Activated naive CD4-positive, alpha-beta T cell treated with anti-CD3 and anti-CD28 coated beads for 36 hours (primary cell): ENCODE measurements at regions of chr19 and their contacts with region 1.

Region 1: DNA sequence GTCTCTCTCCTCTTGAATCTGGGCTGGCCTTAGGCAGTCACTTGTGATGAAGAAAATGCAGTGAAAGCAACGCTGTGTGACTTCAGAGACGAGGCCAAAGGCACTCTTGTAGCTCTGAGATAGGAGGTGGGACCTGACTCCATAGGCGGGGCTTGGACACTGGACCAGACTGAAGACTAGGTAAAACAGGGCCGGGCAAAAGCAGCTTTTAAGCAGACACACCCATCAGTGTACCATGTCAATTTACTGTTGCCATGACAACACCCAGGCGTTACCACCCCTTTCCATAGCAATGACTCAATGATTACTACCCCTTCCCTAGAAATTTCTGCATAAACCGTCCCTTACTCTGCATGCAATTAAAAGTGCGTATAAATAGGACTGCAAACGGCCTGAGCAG is 6.6 kb upstream of the EID2 start:
- DNase-seq: no peak
- H3K4me3 Mint-ChIP-seq: no peak overlapping the region
- H3K27ac Mint-ChIP-seq: no peak overlapping the region
- H3K4me1 Mint-ChIP-seq: peaks cover 45% of the 10 kb centered on the region
- H3K27me3 Mint-ChIP-seq: no peaks in the 10 kb centered on the region

Region 2: DNA sequence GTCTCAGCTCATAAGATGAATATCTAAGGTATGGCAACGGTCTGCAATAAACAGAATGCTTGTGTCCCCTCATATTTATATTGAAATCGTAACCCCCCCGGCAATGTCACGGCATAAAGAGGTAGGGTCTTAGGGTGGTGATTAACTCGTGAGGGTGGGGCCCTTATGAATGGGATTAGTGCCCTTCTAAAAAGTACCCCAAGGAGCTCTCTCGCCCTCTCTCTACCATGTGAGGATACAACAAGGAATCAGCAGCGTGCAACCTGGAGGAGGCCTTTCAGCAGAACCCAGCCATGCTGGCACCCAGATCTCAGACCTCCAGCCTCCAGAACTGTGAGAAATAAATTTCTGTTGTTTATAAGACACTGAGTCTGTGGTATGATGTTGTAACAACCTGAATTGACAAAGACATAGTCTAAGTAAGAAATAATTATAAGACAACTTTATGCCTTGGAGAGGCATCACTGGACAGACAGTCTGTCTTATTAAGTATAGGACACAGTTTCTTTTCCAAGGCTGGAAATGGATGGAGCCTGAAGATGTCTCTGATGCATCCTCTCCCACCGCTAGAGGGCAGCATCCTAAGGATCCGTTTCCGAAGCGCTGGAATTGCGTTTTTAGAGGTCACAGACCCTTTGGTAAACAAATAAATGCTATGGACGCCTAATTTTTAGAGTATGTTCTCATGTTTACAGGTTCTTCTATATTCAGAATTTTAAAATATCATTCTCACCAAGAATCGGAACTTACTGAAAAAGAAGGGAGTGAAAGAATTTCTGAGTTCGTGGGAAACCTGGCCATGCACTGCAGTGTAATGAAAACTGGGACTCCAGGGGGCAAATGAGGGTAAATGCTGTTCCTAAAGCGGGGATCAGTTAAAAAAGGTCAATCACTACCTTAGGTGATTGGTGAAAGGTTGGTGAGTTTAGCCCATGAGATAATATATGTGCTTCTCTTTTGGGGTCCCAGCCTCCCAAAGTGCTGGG is 218.8 kb after region 1 on chr19:
- CTCF ChIA-PET with region 1: interaction called, 3 read pairs
- intact Hi-C with region 1: loop called (anchors 1 kb)
- DNase-seq: peak; percentile 48
- H3K4me3 Mint-ChIP-seq: no peak overlapping the region
- H3K27ac Mint-ChIP-seq: no peak overlapping the region
- H3K4me1 Mint-ChIP-seq: no peaks in the 10 kb centered on the region
- H3K27me3 Mint-ChIP-seq: no peaks in the 10 kb centered on the region